ENCODE measurements at regions of chr20 and their contacts with region 1.

Region 1: GRCh38 chr20:45465491-45466266 is 3.9 kb upstream of the WFDC2 start:
- DNase-seq: no peak
- H3K4me3 ChIP-seq: no peak overlapping the region
- H3K27ac ChIP-seq: no peak overlapping the region
- H3K4me1 ChIP-seq: peaks cover 4% of the 10 kb centered on the region
- H3K27me3 ChIP-seq: peaks cover 50 to 65% of the 10 kb centered on the region in 2 experiments
- CTCF ChIP-seq: no peak
- POLR2A ChIP-seq: no peak

Region 2: GRCh38 chr20:45450097-45450818 is 15.4 kb before region 1 on chr20:
- CTCF ChIA-PET with region 1: interaction called, 20 read pairs
- POLR2A ChIA-PET with region 1: no interaction called
- dilution Hi-C with region 1: no loop called
- intact Hi-C with region 1: no loop called
- DNase-seq: peak; percentile 54
- H3K4me3 ChIP-seq: no peak overlapping the region
- H3K27ac ChIP-seq: no peak overlapping the region
- H3K4me1 ChIP-seq: no peaks in the 10 kb centered on the region
- H3K27me3 ChIP-seq: peaks cover 0 to 3% of the 10 kb centered on the region in 2 experiments
- CTCF ChIP-seq: peak; percentile 48 to 56
- POLR2A ChIP-seq: no peak